ENCODE measurements at regions of chr1 and their contacts with region 1.

Region 1: GRCh38 chr1:155017041-155017945 is 14.7 kb downstream of the ZBTB7B start:
- DNase-seq: peak; percentile 85
- H3K4me3 Mint-ChIP-seq: no peak overlapping the region
- H3K27ac Mint-ChIP-seq: peak overlapping the region; percentile 84
- H3K4me1 Mint-ChIP-seq: peaks cover 70% of the 10 kb centered on the region
- H3K27me3 Mint-ChIP-seq: no peaks in the 10 kb centered on the region

Region 2: GRCh38 chr1:154931940-154932487 is 85.3 kb before region 1 on chr1:
- CTCF ChIA-PET with region 1: no interaction called
- POLR2A ChIA-PET with region 1: no interaction called
- DNase-seq: no peak
- H3K4me3 Mint-ChIP-seq: no peak overlapping the region
- H3K27ac Mint-ChIP-seq: no peak overlapping the region
- H3K4me1 Mint-ChIP-seq: peaks cover 25% of the 10 kb centered on the region
- H3K27me3 Mint-ChIP-seq: no peaks in the 10 kb centered on the region

Region 3: GRCh38 chr1:154961497-154962262 is 55.6 kb before region 1 on chr1 and contains the start of gene PYGO2:
- CTCF ChIA-PET with region 1: interaction called, 23 read pairs
- POLR2A ChIA-PET with region 1: interaction called, 3 read pairs
- DNase-seq: peak; percentile 83
- H3K4me3 Mint-ChIP-seq: peak within 1 kb of the TSS; percentile 99
- H3K27ac Mint-ChIP-seq: peak within 1 kb of the TSS; percentile 93
- H3K4me1 Mint-ChIP-seq: peaks cover 53% of the 10 kb centered on the region
- H3K27me3 Mint-ChIP-seq: no peaks in the 10 kb centered on the region
- total RNA-seq, gene PYGO2: 50.0 to 50.2 TPM

Region 4: GRCh38 chr1:154992721-154993571 is 24.3 kb before region 1 on chr1:
- CTCF ChIA-PET with region 1: interaction called, 184 read pairs
- POLR2A ChIA-PET with region 1: no interaction called
- DNase-seq: no peak
- H3K4me3 Mint-ChIP-seq: no peak overlapping the region
- H3K27ac Mint-ChIP-seq: peak overlapping the region; percentile 66
- H3K4me1 Mint-ChIP-seq: peaks cover 23% of the 10 kb centered on the region
- H3K27me3 Mint-ChIP-seq: no peaks in the 10 kb centered on the region

Region 5: GRCh38 chr1:155044812-155045690 is 27.8 kb after region 1 on chr1:
- CTCF ChIA-PET with region 1: interaction called, 222 read pairs
- POLR2A ChIA-PET with region 1: interaction called, 5 read pairs
- DNase-seq: peak; percentile 78
- H3K4me3 Mint-ChIP-seq: no peak overlapping the region
- H3K27ac Mint-ChIP-seq: peak overlapping the region; percentile 60
- H3K4me1 Mint-ChIP-seq: peaks cover 16% of the 10 kb centered on the region
- H3K27me3 Mint-ChIP-seq: peaks cover 2% of the 10 kb centered on the region